Psoas muscle (tissue), 8 donors: ENCODE measurements at regions of chr22 and their contacts with region 1.

Region 1: GRCh38 chr22:30763815-30764686 is 69.4 kb downstream of the OSBP2 start:
- DNase-seq: peak in 1 of 2 donors; percentile 21
- ATAC-seq: peak; percentile 65 to 85 (median 72)
- H3K4me3 ChIP-seq: no peak overlapping the region
- H3K27ac ChIP-seq: no peak overlapping the region
- H3K4me1 ChIP-seq: no peaks in the 10 kb centered on the region
- H3K27me3 ChIP-seq: no peaks in the 10 kb centered on the region
- CTCF ChIP-seq: peak; percentile 59

Region 2: DNA sequence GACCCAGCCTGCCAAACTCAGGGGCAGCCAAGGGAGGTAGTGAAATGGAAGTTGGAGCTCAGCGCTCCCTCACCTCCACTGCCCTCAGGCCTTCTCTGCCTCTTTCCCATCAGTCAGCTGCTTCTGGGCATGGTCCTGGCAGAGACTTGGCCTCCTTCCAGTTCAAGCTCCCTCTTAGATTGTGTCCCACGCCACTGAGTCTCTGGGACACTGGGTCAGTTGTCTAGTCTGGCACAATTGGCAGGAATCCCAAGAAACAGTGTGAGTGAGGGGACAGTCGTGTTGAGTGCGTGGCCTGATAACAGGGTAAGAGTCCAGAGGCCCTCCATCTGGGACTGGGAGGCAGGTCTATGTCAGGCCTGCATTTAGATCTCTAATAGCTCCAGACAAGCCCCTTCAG is 135.6 kb before region 1 on chr22:
- intact Hi-C with region 1: no loop called
- DNase-seq: no peak
- ATAC-seq: no peak
- H3K4me3 ChIP-seq: no peak overlapping the region
- H3K27ac ChIP-seq: no peak overlapping the region
- H3K4me1 ChIP-seq: no peaks in the 10 kb centered on the region
- H3K27me3 ChIP-seq: no peaks in the 10 kb centered on the region
- CTCF ChIP-seq: no peak

Region 3: GRCh38 chr22:30777587-30777986 is 13.5 kb after region 1 on chr22:
- intact Hi-C with region 1: no loop called
- DNase-seq: no peak
- ATAC-seq: peak in 2 of 4 donors; percentile 48 to 65
- H3K4me3 ChIP-seq: no peak overlapping the region
- H3K27ac ChIP-seq: no peak overlapping the region
- H3K4me1 ChIP-seq: no peaks in the 10 kb centered on the region
- H3K27me3 ChIP-seq: no peaks in the 10 kb centered on the region
- CTCF ChIP-seq: no peak

Region 4: GRCh38 chr22:30890686-30891442 is 126.8 kb after region 1 on chr22:
- intact Hi-C with region 1: loop called in 1 of 2 experiments (anchors 10 kb)
- DNase-seq: peak in 1 of 2 donors; percentile 71
- ATAC-seq: peak; percentile 63 to 85 (median 72)
- H3K4me3 ChIP-seq: no peak overlapping the region
- H3K27ac ChIP-seq: no peak overlapping the region
- H3K4me1 ChIP-seq: no peaks in the 10 kb centered on the region
- H3K27me3 ChIP-seq: no peaks in the 10 kb centered on the region
- CTCF ChIP-seq: peak; percentile 76

Region 5: DNA sequence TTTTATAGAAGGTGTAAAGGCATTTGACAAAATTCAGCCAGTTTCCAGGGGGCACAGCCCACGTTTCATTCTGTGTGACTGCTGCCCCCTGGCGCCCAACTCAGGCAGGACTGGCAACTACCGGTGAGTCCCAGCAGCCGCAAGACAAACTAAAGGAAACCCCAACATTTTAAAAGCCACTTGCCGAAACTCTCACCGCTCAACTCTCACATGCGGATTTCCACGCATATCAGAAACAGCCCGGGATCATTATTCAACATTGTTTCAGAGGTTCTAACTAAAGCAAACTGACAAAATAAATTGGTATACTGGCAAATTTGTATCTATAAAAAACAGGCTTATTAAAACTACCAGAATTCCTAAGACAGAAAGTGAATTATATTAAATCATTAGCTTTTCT is 156.4 kb after region 1 on chr22:
- intact Hi-C with region 1: loop called (anchors 1 to 2 kb)
- DNase-seq: peak; percentile 83 to 87
- ATAC-seq: peak; percentile 67 to 82 (median 68)
- H3K4me3 ChIP-seq: peak overlapping the region; percentile 68
- H3K27ac ChIP-seq: no peak overlapping the region
- H3K4me1 ChIP-seq: peaks cover 4% of the 10 kb centered on the region
- H3K27me3 ChIP-seq: no peaks in the 10 kb centered on the region
- CTCF ChIP-seq: peak; percentile 94